ENCODE measurements at regions of chr7 and their contacts with region 1.

Region 1: DNA sequence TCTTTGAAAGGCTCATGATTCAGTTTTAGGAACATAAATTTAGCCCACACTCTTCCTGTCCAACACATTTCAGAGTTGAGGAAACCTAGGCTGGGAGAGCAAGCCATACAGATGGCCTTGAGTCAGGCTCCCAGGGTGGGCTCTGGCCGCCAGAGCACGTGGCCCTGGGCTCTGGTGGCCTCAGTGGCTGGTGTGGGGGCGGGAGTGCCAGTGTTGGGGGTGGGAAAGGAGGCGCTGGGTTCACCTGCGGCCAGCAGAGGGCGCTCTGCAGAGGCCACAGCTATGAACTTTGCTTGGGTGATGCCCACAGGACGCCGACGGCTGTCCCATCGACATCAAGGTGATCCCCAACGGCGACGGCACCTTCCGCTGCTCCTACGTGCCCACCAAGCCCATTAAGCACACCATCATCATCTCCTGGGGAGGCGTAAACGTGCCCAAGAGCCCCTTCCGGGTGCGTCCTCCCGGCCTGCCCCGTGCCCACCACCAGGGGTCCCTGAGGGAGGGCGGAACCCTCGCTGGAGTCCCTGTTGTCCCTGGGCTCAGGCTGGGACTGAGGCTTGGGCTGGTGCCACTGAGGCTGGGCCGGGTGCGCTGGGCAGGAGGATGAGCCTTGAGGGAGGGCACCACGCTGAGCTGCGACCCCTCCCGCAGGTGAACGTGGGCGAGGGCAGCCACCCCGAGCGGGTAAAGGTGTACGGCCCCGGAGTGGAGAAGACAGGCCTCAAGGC is 11.9 kb downstream of the FLNC start:
- DNase-seq: peak; percentile 69
- ATAC-seq: peak; percentile 64
- H3K4me3 Mint-ChIP-seq: no peak overlapping the region
- H3K27ac Mint-ChIP-seq: peak overlapping the region; percentile 34
- H3K4me1 Mint-ChIP-seq: peaks cover 1% of the 10 kb centered on the region
- H3K27me3 Mint-ChIP-seq: no peaks in the 10 kb centered on the region

Region 2: GRCh38 chr7:128862571-128863432 is 20.7 kb after region 1 on chr7 and contains the start of gene ATP6V1F:
- CTCF ChIA-PET with region 1: interaction called, 13 read pairs
- POLR2A ChIA-PET with region 1: interaction called, 5 read pairs
- DNase-seq: peak; percentile 99
- ATAC-seq: peak; percentile 94
- H3K4me3 Mint-ChIP-seq: peak within 1 kb of the TSS; percentile 90
- H3K27ac Mint-ChIP-seq: peak within 1 kb of the TSS; percentile 92
- H3K4me1 Mint-ChIP-seq: peaks cover 19% of the 10 kb centered on the region
- H3K27me3 Mint-ChIP-seq: peaks cover 1% of the 10 kb centered on the region
- total RNA-seq, gene ATP6V1F: 130 to 138 TPM

Region 3: DNA sequence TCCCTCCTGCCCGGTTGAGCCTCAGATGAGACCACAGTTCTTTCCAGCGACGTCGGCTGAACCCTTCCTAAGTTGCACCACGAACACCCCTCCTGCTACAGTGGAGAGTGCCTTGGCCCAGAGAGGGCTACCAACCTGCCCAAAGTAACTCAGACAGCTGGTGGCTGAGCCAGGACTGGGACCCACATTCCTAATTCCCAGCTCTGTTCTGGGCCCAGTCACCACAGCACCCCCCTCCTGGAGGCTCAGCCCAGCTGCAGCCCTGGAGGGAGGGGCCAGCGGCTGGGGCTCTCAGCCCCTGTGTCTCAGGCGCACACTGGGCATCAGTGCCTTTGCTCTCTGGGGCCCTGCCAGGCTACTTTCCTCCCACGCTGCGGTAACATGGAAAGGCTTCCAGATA is 31.1 kb after region 1 on chr7:
- CTCF ChIA-PET with region 1: no interaction called
- POLR2A ChIA-PET with region 1: no interaction called
- DNase-seq: no peak
- ATAC-seq: no peak
- H3K4me3 Mint-ChIP-seq: no peak overlapping the region
- H3K27ac Mint-ChIP-seq: no peak overlapping the region
- H3K4me1 Mint-ChIP-seq: peaks cover 17% of the 10 kb centered on the region
- H3K27me3 Mint-ChIP-seq: peaks cover 18% of the 10 kb centered on the region

Region 4: DNA sequence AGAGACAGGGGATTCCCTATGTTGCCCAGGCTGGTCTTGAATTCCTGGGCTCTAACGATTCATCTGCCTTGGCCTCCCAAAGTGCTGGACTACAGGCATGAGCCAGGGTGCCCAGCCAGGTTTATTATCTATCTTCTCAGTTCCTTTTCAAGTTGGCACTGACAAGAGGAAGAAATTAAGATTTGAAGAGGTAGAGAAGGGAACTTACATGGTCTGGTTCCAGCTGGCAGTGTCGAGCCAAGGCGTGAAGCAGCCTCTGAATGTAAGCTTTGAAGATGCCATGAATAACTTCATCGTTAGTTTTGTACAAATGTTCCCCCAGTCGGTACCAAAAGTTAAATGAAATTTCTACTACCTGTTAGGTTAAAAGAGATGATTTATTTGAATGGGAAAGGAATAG is 155.1 kb after region 1 on chr7:
- CTCF ChIA-PET with region 1: no interaction called
- POLR2A ChIA-PET with region 1: no interaction called
- DNase-seq: no peak
- ATAC-seq: no peak
- H3K4me3 Mint-ChIP-seq: no peak overlapping the region
- H3K27ac Mint-ChIP-seq: no peak overlapping the region
- H3K4me1 Mint-ChIP-seq: no peaks in the 10 kb centered on the region
- H3K27me3 Mint-ChIP-seq: no peaks in the 10 kb centered on the region